GM10248 (cell line): ENCODE measurements at regions of chr5 and their contacts with region 1.

Region 1: DNA sequence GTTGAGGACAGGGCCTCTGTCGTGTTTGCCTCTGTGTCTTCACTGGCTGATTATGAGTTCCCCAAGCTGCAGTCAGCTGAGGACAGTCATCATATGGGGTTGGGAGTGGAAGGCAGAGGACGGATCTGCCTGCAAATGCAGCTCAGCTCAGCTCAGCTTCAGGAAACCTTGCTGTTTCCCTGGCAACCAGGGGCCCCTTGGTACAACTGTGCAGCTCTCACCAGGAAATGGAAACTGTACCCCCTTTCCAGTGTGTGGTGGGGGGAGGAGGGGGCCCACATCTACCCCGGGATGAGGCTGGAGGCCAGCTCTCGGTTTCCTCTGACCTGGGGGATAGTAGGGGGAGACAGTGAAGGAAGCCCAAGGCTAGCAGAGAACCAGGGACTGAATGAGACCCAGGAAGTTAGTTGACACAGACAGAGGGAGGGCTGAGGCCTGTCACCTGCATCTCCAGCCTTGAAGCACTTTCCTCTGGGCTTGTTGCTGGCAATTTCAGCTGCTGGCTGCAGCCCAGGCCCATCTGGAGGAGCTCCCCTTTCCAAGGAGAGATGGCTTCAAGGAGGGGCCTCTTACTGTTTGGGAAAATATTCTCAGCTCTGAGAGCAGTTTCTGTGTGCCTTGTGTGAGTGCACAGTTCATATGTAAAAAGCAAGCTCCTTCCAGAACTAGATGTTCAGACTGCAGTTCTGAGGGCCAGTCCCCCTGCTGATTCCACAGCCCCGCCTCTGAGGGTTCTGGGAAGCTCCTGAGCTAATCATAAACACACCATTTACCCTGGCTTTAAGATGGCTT is 6.9 kb downstream of the ANXA6 start:
- DNase-seq: peak; percentile 54
- CTCF ChIP-seq: no peak

Region 2: DNA sequence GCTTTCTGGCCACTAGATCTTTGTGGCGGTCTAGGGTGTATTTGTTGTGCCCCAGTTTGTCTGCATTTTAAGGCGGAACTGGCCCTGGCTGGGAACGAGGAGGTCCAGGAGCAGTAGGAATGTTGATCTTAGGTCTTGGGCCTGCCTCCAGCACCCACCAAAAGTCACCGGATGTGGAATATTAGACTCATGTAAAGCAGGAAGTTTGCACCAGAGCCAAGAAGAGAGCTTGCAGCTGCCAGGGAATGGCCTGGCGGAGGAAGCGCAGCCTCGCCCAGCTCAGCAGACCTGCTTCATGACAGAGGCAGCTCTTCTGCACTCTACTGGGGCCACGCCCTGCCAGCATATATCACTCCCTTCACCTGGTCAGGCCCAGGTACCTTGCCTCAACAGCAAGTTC is 127.0 kb before region 1 on chr5:
- CTCF ChIA-PET with region 1: no interaction called
- POLR2A ChIA-PET with region 1: no interaction called
- DNase-seq: no peak
- CTCF ChIP-seq: no peak

Region 3: DNA sequence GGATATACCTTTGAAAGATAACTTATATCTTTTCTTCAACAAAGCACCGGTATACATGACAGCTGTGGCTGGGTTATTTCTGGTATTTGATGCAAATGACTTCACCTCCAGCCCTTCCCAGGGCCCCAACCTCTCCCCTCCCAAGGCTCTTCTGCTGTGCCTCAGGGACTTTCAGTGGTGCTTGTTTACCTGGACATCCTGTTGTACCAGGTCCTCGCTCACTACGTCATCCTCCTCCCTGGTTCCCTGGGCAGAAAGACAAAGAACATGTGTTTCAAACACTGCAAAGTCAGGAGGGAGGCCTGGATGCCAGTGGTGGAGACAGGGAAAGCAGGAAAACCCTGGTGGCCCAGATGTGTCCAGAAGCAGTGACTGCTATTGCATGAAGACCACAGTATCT is 16.4 kb before region 1 on chr5:
- CTCF ChIA-PET with region 1: interaction called, 221 read pairs
- POLR2A ChIA-PET with region 1: interaction called, 12 read pairs
- DNase-seq: no peak
- CTCF ChIP-seq: no peak

Region 4: DNA sequence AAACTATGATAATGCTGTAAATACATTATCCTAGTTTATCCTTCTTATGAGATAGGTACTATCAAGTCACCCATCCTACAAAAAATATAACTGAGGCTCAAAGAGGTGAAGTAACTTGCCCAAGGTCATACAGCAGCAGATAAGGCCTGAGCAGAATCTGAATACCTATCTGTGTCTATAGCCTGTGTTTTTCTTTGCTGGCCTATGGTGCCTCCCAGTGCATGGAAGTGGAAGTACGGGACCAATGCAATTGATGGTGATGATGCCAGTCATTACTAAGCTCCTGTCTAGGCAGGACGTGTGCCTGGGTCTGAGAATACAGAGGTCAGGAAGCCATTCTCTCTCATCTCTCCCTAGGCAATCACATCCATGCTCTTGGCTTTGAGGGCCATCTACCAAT is 372.7 kb after region 1 on chr5:
- CTCF ChIA-PET with region 1: no interaction called
- POLR2A ChIA-PET with region 1: no interaction called
- DNase-seq: peak; percentile 75
- CTCF ChIP-seq: peak; percentile 54